ENCODE measurements at regions of chr10 and their contacts with region 1.

Region 1: DNA sequence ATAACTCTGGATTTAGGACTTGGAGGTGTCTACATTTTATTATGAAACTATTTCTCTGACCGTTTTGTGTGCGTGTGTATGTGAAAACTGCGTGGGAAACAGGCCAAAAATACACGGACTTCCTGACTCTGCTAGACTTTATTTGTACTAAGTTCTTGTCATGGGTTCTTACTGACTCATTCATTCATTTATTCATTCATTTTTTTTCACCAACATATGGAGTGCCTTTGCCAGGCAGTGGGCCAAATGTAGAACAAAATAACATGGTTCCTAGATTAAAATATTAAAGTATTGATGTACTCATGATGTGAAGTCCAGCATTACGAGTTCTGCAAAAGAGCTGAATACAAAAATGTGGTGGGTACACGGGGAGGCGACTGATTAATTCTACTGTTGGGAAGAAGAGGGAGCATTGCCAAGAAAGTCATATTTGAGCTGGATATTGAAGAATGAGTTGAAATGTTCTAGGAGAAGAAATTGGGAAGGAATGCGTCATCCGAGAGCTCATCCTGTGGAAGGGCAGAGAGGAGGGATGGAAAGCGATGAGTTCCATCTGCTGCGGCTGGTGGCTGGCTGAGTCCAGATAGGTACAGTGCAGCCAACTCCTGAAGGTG is 24.6 kb downstream of the CACNB2 start:
- DNase-seq: no peak
- ATAC-seq: no peak
- H3K4me3 ChIP-seq: no peak overlapping the region
- H3K4me3 Mint-ChIP-seq: no peak overlapping the region
- H3K27ac ChIP-seq: no peak overlapping the region
- H3K27ac Mint-ChIP-seq: no peak overlapping the region
- H3K4me1 ChIP-seq: no peaks in the 10 kb centered on the region
- H3K4me1 Mint-ChIP-seq: no peaks in the 10 kb centered on the region
- H3K27me3 ChIP-seq: no peaks in the 10 kb centered on the region
- H3K27me3 Mint-ChIP-seq: no peaks in the 10 kb centered on the region
- CTCF ChIP-seq: no peak

Region 2: GRCh38 chr10:17712717-17713471 is 452.0 kb before region 1 on chr10:
- CTCF ChIA-PET with region 1: no interaction called
- POLR2A ChIA-PET with region 1: no interaction called
- intact Hi-C with region 1: no loop called
- DNase-seq: no peak
- ATAC-seq: no peak
- H3K4me3 ChIP-seq: no peak overlapping the region
- H3K4me3 Mint-ChIP-seq: no peak overlapping the region
- H3K27ac ChIP-seq: no peak overlapping the region
- H3K27ac Mint-ChIP-seq: no peak overlapping the region
- H3K4me1 ChIP-seq: no peaks in the 10 kb centered on the region
- H3K4me1 Mint-ChIP-seq: no peaks in the 10 kb centered on the region
- H3K27me3 ChIP-seq: no peaks in the 10 kb centered on the region
- H3K27me3 Mint-ChIP-seq: no peaks in the 10 kb centered on the region
- CTCF ChIP-seq: no peak

Region 3: GRCh38 chr10:18185621-18186020 is 20.8 kb after region 1 on chr10:
- CTCF ChIA-PET with region 1: no interaction called
- POLR2A ChIA-PET with region 1: no interaction called
- intact Hi-C with region 1: loop called in 1 of 2 experiments (anchors 1 kb)
- DNase-seq: no peak
- ATAC-seq: no peak
- H3K4me3 ChIP-seq: no peak overlapping the region
- H3K4me3 Mint-ChIP-seq: no peak overlapping the region
- H3K27ac ChIP-seq: no peak overlapping the region
- H3K27ac Mint-ChIP-seq: no peak overlapping the region
- H3K4me1 ChIP-seq: no peaks in the 10 kb centered on the region
- H3K4me1 Mint-ChIP-seq: no peaks in the 10 kb centered on the region
- H3K27me3 ChIP-seq: no peaks in the 10 kb centered on the region
- H3K27me3 Mint-ChIP-seq: no peaks in the 10 kb centered on the region
- CTCF ChIP-seq: no peak